ENCODE measurements at regions of chr2 and their contacts with region 1.

Region 1: DNA sequence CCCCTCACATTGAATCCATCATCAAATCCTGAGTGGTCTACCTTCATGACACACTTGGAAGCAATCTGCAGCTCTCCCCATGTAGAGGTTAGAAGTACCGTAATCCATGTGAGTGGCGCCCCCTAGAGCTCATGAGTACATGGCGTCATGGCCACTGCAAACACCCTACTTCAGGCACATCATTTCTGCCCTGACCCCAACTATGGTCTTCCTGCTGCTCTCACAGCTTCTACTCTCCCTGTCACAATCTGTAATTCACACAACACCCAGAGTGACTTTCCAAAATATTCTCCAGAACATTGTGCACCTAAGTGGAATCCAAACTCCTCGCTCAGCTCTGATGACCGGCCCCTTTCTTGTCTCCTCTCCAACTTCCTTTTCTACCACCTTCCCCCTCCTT is 141.9 kb downstream of the ANKRD44 start:
- DNase-seq: peak; percentile 21 to 63 (median 53)
- ATAC-seq: peak; percentile 91
- H3K4me3 ChIP-seq: no peak overlapping the region
- H3K4me3 Mint-ChIP-seq: peak overlapping the region in 7 of 10 donors; percentile 1 to 59 (median 19)
- H3K27ac ChIP-seq: no peak overlapping the region
- H3K27ac Mint-ChIP-seq: peak overlapping the region; percentile 25 to 93 (median 84)
- H3K4me1 ChIP-seq: peaks cover 3 to 60% of the 10 kb centered on the region in 2 donors
- H3K4me1 Mint-ChIP-seq: peaks cover 45 to 91% (median 82%) of the 10 kb centered on the region in 7 donors
- H3K27me3 ChIP-seq: no peaks in the 10 kb centered on the region
- H3K27me3 Mint-ChIP-seq: no peaks in the 10 kb centered on the region

Region 2: DNA sequence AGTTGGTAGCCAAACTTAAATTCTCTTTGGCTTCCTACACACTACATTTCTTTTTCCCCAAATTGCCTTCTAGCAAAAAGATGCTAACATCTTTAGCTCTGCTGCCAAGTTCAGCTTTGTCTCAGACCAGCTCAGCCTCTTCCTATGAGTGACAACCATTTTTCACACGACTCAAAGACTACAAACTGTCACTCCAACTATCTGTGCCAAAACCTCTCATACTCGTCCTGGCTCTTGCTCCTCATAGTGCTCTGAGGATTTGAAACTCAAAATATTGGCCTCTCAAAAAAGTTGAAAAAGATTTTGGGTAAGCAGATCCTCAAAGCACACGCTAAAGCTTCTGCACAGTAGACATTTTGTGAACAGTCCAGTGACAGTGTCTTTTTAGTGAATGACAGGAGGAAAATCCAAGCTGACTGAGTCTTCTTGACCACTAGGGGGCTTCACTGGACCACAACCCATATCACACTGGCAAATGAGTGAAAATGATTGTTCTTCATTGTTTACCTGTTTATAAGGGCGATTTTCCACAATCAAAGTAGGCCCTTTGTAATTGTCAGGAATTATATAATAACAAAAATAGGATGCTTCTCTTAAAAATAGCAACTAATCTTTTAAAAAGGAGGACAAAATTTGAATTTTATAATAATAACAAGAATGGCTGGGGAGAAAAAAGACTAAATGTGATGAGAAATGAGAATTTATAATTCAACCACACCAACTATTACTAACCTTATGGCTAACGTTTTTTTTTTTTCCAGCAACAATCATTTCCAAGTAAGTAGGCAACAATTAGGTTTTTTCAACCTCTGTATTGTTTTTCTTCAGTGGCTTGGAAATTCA is 156.7 kb before region 1 on chr2:
- CTCF ChIA-PET with region 1: no interaction called
- POLR2A ChIA-PET with region 1: no interaction called
- intact Hi-C with region 1: loop called in 1 of 2 experiments (anchors 10 kb)
- DNase-seq: peak in 6 of 9 donors; percentile 11 to 51 (median 40)
- ATAC-seq: peak; percentile 76
- H3K4me3 ChIP-seq: no peak overlapping the region
- H3K4me3 Mint-ChIP-seq: no peak overlapping the region
- H3K27ac ChIP-seq: no peak overlapping the region
- H3K27ac Mint-ChIP-seq: peak overlapping the region; percentile 5 to 90 (median 73)
- H3K4me1 ChIP-seq: peaks cover 0 to 3% of the 10 kb centered on the region in 2 donors
- H3K4me1 Mint-ChIP-seq: peaks cover 0 to 18% (median 9%) of the 10 kb centered on the region in 7 donors
- H3K27me3 ChIP-seq: no peaks in the 10 kb centered on the region
- H3K27me3 Mint-ChIP-seq: no peaks in the 10 kb centered on the region

Region 3: GRCh38 chr2:197130318-197130717 is 38.4 kb before region 1 on chr2:
- CTCF ChIA-PET with region 1: interaction called, 4 read pairs
- POLR2A ChIA-PET with region 1: no interaction called
- intact Hi-C with region 1: loop called (anchors 1 to 5 kb)
- DNase-seq: peak in 7 of 9 donors; percentile 38 to 64 (median 50)
- ATAC-seq: peak; percentile 92
- H3K4me3 ChIP-seq: no peak overlapping the region
- H3K4me3 Mint-ChIP-seq: peak overlapping the region; percentile 6 to 67 (median 45)
- H3K27ac ChIP-seq: peak overlapping the region; percentile 46
- H3K27ac Mint-ChIP-seq: peak overlapping the region; percentile 32 to 95 (median 71)
- H3K4me1 ChIP-seq: peaks cover 42 to 51% of the 10 kb centered on the region in 2 donors
- H3K4me1 Mint-ChIP-seq: peaks cover 60 to 95% (median 80%) of the 10 kb centered on the region in 7 donors
- H3K27me3 ChIP-seq: no peaks in the 10 kb centered on the region
- H3K27me3 Mint-ChIP-seq: no peaks in the 10 kb centered on the region

Region 4: GRCh38 chr2:197152451-197153228 is 16.1 kb before region 1 on chr2:
- CTCF ChIA-PET with region 1: interaction called, 19 read pairs
- POLR2A ChIA-PET with region 1: interaction called, 9 read pairs
- intact Hi-C with region 1: loop called in 1 of 2 experiments (anchors 1 kb)
- DNase-seq: peak in 7 of 9 donors; percentile 53 to 66 (median 59)
- ATAC-seq: peak; percentile 93
- H3K4me3 ChIP-seq: peak overlapping the region; percentile 10
- H3K4me3 Mint-ChIP-seq: peak overlapping the region; percentile 56 to 83 (median 78)
- H3K27ac ChIP-seq: peak overlapping the region; percentile 57
- H3K27ac Mint-ChIP-seq: peak overlapping the region; percentile 68 to 98 (median 92)
- H3K4me1 ChIP-seq: peaks cover 37 to 59% of the 10 kb centered on the region in 2 donors
- H3K4me1 Mint-ChIP-seq: peaks cover 65 to 92% (median 85%) of the 10 kb centered on the region in 7 donors
- H3K27me3 ChIP-seq: no peaks in the 10 kb centered on the region
- H3K27me3 Mint-ChIP-seq: no peaks in the 10 kb centered on the region

Region 5: DNA sequence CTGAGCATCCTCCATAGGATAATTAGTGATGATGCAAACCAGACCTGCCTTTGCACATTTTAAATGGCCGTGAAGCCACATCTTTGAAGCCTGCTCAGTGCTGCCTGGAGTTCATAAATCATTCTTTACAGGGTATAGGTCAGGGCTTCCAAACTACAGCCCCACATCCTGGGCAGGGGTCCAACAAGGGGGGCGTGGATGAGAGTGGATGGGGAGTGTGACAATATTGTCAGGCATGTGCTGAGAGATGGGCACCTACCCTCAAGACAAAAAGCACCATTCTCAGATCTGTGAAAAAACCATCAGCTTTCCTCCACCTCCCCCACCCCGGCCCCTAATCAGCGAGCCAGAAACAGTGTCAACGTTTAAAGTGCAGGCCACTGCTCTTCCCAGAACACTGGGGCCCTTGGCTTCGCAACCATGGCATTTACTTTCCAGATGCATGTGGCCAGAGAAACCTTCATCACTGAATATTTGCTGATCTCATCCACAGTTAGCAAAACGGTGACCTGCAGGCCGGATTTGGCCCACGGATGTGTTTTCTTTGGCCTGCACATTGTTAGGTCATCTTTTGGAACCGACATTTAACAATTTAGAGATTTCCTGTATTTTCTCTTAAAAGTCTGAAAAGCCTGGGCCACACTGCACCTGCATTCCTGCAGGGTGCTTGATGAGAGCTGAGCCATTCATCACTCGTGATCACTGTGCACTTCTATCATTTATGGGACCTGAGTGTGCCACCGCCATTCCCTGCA is 11.2 kb after region 1 on chr2:
- CTCF ChIA-PET with region 1: interaction called, 10 read pairs
- POLR2A ChIA-PET with region 1: no interaction called
- intact Hi-C with region 1: loop called in 1 of 2 experiments (anchors 2 kb)
- DNase-seq: no peak
- ATAC-seq: no peak
- H3K4me3 ChIP-seq: no peak overlapping the region
- H3K4me3 Mint-ChIP-seq: peak overlapping the region in 2 of 10 donors; percentile 12 to 42
- H3K27ac ChIP-seq: no peak overlapping the region
- H3K27ac Mint-ChIP-seq: peak overlapping the region in 6 of 9 donors; percentile 41 to 87 (median 63)
- H3K4me1 ChIP-seq: peaks cover 8 to 29% of the 10 kb centered on the region in 2 donors
- H3K4me1 Mint-ChIP-seq: peaks cover 42 to 97% (median 80%) of the 10 kb centered on the region in 7 donors
- H3K27me3 ChIP-seq: no peaks in the 10 kb centered on the region
- H3K27me3 Mint-ChIP-seq: no peaks in the 10 kb centered on the region

Region 6: DNA sequence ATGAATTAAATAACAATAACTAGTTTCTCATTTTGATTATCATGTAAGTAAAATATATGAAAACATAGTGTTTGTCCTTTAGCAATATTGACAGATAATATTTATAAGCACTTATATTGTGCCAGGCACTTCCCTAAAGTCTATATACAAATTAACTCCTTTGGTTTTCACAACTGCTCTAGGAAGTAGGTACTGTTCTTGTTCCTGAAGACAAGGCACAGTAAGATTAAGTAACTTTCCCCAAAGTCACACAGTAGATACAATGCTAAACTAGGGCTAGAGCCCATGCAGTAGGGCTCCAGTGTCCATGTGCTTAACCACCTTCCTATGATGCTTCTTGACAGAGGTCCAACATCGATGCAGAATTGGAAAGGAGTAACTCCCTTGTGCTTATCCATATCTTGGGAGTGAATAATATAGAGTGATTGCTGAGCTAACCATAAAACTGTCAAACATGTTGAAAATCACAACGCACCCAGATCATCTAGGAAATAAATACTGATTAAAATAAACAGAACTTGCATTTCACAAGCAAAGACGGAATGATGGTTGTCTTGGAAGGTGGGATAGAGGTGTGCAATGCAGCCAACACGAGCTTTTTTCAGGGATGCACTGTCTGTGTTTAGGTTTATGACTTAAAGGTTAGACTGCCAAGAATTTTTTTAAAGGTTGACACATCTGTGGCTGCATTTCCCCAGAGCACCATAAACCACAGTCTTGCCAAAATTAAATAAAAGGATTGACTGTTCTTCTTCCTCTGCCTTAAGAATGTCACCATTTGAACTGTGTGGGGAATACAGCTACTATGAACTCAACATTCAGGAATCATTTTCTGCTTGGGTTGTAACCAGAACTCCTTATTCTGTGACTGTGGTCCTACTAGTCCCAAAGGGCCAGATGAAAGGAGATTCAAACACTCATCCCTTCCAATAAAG is 61.1 kb after region 1 on chr2:
- CTCF ChIA-PET with region 1: no interaction called
- POLR2A ChIA-PET with region 1: no interaction called
- intact Hi-C with region 1: no loop called
- DNase-seq: no peak
- ATAC-seq: no peak
- H3K4me3 ChIP-seq: no peak overlapping the region
- H3K4me3 Mint-ChIP-seq: peak overlapping the region in 9 of 10 donors; percentile 26 to 83 (median 47)
- H3K27ac ChIP-seq: peak overlapping the region; percentile 58
- H3K27ac Mint-ChIP-seq: peak overlapping the region in 8 of 9 donors; percentile 20 to 96 (median 82)
- H3K4me1 ChIP-seq: peaks cover 69 to 72% of the 10 kb centered on the region in 2 donors
- H3K4me1 Mint-ChIP-seq: peaks cover 68 to 100% (median 98%) of the 10 kb centered on the region in 7 donors
- H3K27me3 ChIP-seq: no peaks in the 10 kb centered on the region
- H3K27me3 Mint-ChIP-seq: no peaks in the 10 kb centered on the region

Measured in naive thymus-derived CD4-positive, alpha-beta T cell (primary cell).